Activated B cell treated with CpG ODN at 0.5 μM for 24 hours (primary cell): ENCODE measurements at regions of chr6 and their contacts with region 1.

Region 1: DNA sequence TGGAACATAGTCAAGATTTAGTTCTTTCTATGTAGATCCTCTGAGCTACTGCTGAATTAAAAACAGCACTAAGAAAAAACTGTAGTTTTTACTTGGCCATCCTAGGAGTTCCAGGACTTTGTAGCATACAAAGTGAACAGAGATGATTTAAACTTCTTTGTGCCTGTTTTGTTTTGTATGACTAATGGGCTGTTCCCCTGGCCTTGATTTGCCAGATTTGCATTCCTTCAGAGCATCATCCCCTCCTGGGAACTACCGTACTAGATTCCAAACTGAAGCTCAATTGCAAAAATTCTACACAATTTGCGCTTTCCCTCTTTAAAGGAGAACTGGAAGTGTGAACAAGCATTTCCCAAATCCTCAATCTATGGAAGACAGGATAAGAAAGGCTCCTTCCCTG is 23.1 kb downstream of the ACOT13 start:
- DNase-seq: no peak
- ATAC-seq: no peak
- H3K4me3 Mint-ChIP-seq: no peak overlapping the region
- H3K27ac Mint-ChIP-seq: no peak overlapping the region
- H3K4me1 Mint-ChIP-seq: no peaks in the 10 kb centered on the region
- H3K27me3 Mint-ChIP-seq: no peaks in the 10 kb centered on the region
- CTCF ChIP-seq: no peak

Region 2: GRCh38 chr6:24283043-24283985 is 406.6 kb before region 1 on chr6:
- CTCF ChIA-PET with region 1: no interaction called
- POLR2A ChIA-PET with region 1: no interaction called
- intact Hi-C with region 1: loop called (anchors 1 kb)
- DNase-seq: no peak
- ATAC-seq: peak; percentile 40
- H3K4me3 Mint-ChIP-seq: no peak overlapping the region
- H3K27ac Mint-ChIP-seq: no peak overlapping the region
- H3K4me1 Mint-ChIP-seq: no peaks in the 10 kb centered on the region
- H3K27me3 Mint-ChIP-seq: peaks cover 6% of the 10 kb centered on the region
- CTCF ChIP-seq: no peak

Region 3: DNA sequence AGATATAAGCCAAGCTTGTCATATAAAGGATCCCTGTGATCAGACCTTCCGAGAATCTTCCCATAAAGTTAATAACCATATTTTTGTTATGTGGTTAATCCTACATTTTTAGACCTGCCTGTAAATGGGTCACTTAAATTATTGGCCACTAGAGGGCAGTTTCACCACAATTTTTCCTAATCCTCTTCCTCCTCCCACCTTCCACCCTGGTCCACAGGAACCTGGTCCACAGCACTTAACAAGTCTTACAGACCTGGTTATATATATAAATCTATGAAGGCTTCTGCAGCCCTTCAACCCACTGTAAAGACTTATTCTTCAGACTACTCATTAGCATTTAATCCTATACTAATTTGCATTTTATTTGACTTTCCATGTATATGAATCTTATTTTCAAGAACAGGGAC is 258.9 kb before region 1 on chr6:
- CTCF ChIA-PET with region 1: no interaction called
- POLR2A ChIA-PET with region 1: no interaction called
- intact Hi-C with region 1: loop called (anchors 1 kb)
- DNase-seq: no peak
- ATAC-seq: peak; percentile 42
- H3K4me3 Mint-ChIP-seq: no peak overlapping the region
- H3K27ac Mint-ChIP-seq: no peak overlapping the region
- H3K4me1 Mint-ChIP-seq: no peaks in the 10 kb centered on the region
- H3K27me3 Mint-ChIP-seq: no peaks in the 10 kb centered on the region
- CTCF ChIP-seq: peak; percentile 52

Region 4: DNA sequence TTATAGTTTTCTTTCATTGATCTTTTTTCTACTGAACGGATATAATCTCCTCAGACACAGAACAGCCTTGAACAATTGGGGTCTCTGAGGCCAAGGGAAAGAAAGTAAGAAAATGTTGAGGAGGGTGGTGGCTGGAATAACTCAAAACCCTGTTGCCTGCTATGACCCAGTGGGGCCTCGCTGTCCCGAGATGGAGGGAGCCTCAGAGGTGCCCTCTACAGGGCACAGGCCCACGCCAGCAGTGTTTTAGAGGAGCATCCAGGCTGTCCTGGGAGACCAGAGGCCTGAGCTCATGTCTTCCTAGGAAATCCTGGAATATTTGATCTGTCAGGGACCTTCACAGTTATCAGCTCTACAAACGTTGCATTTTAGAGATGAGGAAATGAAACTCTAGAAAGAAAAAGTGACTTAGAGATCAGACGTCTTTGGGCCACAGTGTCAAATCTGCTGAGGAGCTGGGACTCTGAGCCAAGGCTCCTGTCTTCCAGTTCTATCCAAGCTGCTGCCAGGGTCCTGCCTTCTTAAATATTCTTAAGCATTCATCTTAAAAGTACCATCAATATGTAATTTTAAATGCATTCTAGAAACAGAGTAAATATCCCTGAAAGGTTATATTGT is 168.9 kb before region 1 on chr6:
- CTCF ChIA-PET with region 1: no interaction called
- POLR2A ChIA-PET with region 1: no interaction called
- intact Hi-C with region 1: loop called (anchors 1 kb)
- DNase-seq: peak; percentile 35
- ATAC-seq: peak; percentile 40
- H3K4me3 Mint-ChIP-seq: peak overlapping the region; percentile 42
- H3K27ac Mint-ChIP-seq: peak overlapping the region; percentile 88
- H3K4me1 Mint-ChIP-seq: peaks cover 62% of the 10 kb centered on the region
- H3K27me3 Mint-ChIP-seq: no peaks in the 10 kb centered on the region
- CTCF ChIP-seq: no peak

Region 5: DNA sequence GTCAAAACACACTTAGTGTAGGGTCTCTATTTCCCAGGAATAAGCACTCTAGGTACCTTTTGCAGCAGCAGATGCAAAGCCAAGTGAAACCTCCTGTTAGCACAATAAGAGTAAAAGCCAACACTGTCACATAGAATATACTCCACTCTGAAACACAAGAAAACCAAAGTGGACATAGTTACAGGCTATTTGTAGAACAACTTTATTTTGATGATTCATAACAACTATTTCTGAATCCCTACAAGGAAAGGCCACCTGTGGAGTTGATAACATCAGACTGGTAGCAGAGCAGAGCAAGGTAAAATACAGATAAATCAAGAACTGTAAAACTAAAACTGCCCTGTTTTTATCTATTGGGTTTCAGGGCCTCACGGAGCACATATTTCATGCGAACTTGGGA is 135.5 kb before region 1 on chr6:
- CTCF ChIA-PET with region 1: no interaction called
- POLR2A ChIA-PET with region 1: no interaction called
- intact Hi-C with region 1: no loop called
- DNase-seq: no peak
- ATAC-seq: no peak
- H3K4me3 Mint-ChIP-seq: no peak overlapping the region
- H3K27ac Mint-ChIP-seq: no peak overlapping the region
- H3K4me1 Mint-ChIP-seq: no peaks in the 10 kb centered on the region
- H3K27me3 Mint-ChIP-seq: no peaks in the 10 kb centered on the region
- CTCF ChIP-seq: no peak

Region 6: GRCh38 chr6:24666641-24667377 is 23.2 kb before region 1 on chr6 and contains the starts of genes ACOT13 and TDP2:
- CTCF ChIA-PET with region 1: no interaction called
- POLR2A ChIA-PET with region 1: interaction called, 3 read pairs
- intact Hi-C with region 1: loop called (anchors 2 kb)
- DNase-seq: peak; percentile 92
- ATAC-seq: peak; percentile 94
- H3K4me3 Mint-ChIP-seq: peak within 1 kb of the TSS; percentile 99
- H3K27ac Mint-ChIP-seq: peak within 1 kb of the TSS; percentile 96
- H3K4me1 Mint-ChIP-seq: peaks cover 46% of the 10 kb centered on the region
- H3K27me3 Mint-ChIP-seq: no peaks in the 10 kb centered on the region
- CTCF ChIP-seq: no peak
- total RNA-seq, gene ACOT13: 12.0 and 13.8 TPM in 2 replicates
- total RNA-seq, gene TDP2: 48.9 and 51.1 TPM in 2 replicates

Region 7: GRCh38 chr6:24766680-24767462 is 76.9 kb after region 1 on chr6:
- CTCF ChIA-PET with region 1: no interaction called
- POLR2A ChIA-PET with region 1: no interaction called
- intact Hi-C with region 1: loop called (anchors 1 kb)
- DNase-seq: no peak
- ATAC-seq: peak; percentile 78
- H3K4me3 Mint-ChIP-seq: no peak overlapping the region
- H3K27ac Mint-ChIP-seq: no peak overlapping the region
- H3K4me1 Mint-ChIP-seq: no peaks in the 10 kb centered on the region
- H3K27me3 Mint-ChIP-seq: no peaks in the 10 kb centered on the region
- CTCF ChIP-seq: no peak